ENCODE measurements at regions of chr1 and their contacts with region 1.

Region 1: GRCh38 chr1:106602621-106603020 is 453.9 kb upstream of the PRMT6 start:
- DNase-seq: no peak
- ATAC-seq: no peak
- H3K4me3 ChIP-seq: no peak overlapping the region
- H3K27ac ChIP-seq: no peak overlapping the region
- H3K4me1 ChIP-seq: no peaks in the 10 kb centered on the region
- H3K27me3 ChIP-seq: no peaks in the 10 kb centered on the region
- CTCF ChIP-seq: no peak
- EP300 ChIP-seq: no peak
- POLR2A ChIP-seq: no peak
- RAD21 ChIP-seq: no peak

Region 2: GRCh38 chr1:106382758-106383157 is 219.9 kb before region 1 on chr1:
- CTCF ChIA-PET with region 1: no interaction called
- POLR2A ChIA-PET with region 1: no interaction called
- RAD21 ChIA-PET with region 1: no interaction called
- SMC1A ChIA-PET with region 1: no interaction called
- in situ Hi-C with region 1: no loop called
- intact Hi-C with region 1: no loop called
- DNase-seq: no peak
- ATAC-seq: no peak
- H3K4me3 ChIP-seq: no peak overlapping the region
- H3K27ac ChIP-seq: no peak overlapping the region
- H3K4me1 ChIP-seq: no peaks in the 10 kb centered on the region
- H3K27me3 ChIP-seq: no peaks in the 10 kb centered on the region
- CTCF ChIP-seq: no peak
- EP300 ChIP-seq: no peak
- POLR2A ChIP-seq: no peak
- RAD21 ChIP-seq: no peak

Region 3: GRCh38 chr1:106480629-106481028 is 122.0 kb before region 1 on chr1:
- CTCF ChIA-PET with region 1: no interaction called
- POLR2A ChIA-PET with region 1: no interaction called
- RAD21 ChIA-PET with region 1: no interaction called
- SMC1A ChIA-PET with region 1: no interaction called
- in situ Hi-C with region 1: no loop called
- intact Hi-C with region 1: no loop called
- DNase-seq: no peak
- ATAC-seq: no peak
- H3K4me3 ChIP-seq: no peak overlapping the region
- H3K27ac ChIP-seq: no peak overlapping the region
- H3K4me1 ChIP-seq: no peaks in the 10 kb centered on the region
- H3K27me3 ChIP-seq: no peaks in the 10 kb centered on the region
- CTCF ChIP-seq: no peak
- EP300 ChIP-seq: no peak
- POLR2A ChIP-seq: no peak
- RAD21 ChIP-seq: no peak

Region 4: DNA sequence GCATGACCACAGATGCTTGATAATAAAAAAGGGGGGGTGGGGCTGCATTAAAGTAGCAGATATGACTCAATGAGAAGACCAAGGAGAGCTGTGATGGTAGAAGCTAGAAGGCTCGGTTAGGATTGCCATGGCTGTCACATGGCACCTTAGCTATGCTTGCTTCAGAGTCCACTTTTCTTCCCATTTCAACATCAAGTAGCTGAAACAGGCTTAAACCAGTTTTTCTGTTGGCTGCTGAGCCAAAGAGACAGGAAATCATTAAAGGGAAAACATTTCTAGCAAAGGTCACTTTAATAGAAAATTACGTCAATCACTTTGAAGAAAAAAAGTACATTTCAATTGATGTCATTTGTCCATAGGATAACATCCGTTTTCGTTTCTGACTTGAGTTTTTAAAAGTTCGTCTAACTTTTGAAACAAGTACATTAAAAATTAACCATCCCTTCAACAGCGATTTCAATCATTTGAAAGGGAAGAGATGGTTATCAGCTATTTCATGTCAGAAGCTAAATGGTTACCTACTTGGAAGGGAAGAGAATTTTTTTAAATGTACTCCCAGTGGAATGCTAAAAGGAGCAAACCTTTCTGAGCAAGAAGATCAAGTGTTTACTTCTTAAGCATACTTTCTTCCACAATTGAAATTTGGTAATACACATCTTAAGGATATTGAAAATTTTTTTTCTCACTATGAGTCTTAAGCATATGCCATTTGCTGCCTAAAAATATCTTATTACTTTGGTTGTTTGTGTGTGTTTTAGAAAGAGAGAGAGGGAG is 34.2 kb before region 1 on chr1:
- CTCF ChIA-PET with region 1: no interaction called
- POLR2A ChIA-PET with region 1: no interaction called
- RAD21 ChIA-PET with region 1: no interaction called
- SMC1A ChIA-PET with region 1: no interaction called
- in situ Hi-C with region 1: no loop called
- intact Hi-C with region 1: loop called (anchors 1 kb)
- DNase-seq: no peak
- ATAC-seq: peak; percentile 26; the same call in 2 of the 3 replicates
- H3K4me3 ChIP-seq: no peak overlapping the region
- H3K27ac ChIP-seq: no peak overlapping the region
- H3K4me1 ChIP-seq: no peaks in the 10 kb centered on the region
- H3K27me3 ChIP-seq: no peaks in the 10 kb centered on the region
- CTCF ChIP-seq: no peak
- EP300 ChIP-seq: no peak
- POLR2A ChIP-seq: no peak
- RAD21 ChIP-seq: no peak

Measured in GM12878 (cell line).